ENCODE measurements at regions of chr1 and their contacts with region 1.

Region 1: DNA sequence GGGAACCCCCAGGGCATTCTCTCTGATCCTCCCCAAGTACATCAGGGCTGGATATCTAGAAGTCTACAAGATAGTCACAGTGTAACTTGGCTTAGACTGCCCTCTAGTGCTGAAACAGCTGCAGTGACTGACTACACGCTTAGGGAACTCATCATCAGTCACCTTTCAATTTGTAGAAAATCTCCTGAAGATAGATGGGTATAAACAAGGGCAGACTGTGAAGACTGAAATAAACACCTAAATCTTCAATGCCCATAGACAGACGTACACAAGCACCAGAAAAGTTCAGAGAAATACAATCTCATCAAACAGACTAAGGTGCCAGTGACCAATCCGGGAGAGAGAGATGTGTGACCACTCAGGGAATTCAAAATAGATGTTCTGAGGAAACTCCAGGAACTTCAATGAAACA is 46.6 kb downstream of the PACC1 start:
- DNase-seq: peak; percentile 42
- H3K4me3 Mint-ChIP-seq: no peak overlapping the region
- H3K27ac Mint-ChIP-seq: peak overlapping the region; percentile 17
- H3K4me1 Mint-ChIP-seq: peaks cover 4% of the 10 kb centered on the region
- H3K27me3 Mint-ChIP-seq: no peaks in the 10 kb centered on the region

Region 2: DNA sequence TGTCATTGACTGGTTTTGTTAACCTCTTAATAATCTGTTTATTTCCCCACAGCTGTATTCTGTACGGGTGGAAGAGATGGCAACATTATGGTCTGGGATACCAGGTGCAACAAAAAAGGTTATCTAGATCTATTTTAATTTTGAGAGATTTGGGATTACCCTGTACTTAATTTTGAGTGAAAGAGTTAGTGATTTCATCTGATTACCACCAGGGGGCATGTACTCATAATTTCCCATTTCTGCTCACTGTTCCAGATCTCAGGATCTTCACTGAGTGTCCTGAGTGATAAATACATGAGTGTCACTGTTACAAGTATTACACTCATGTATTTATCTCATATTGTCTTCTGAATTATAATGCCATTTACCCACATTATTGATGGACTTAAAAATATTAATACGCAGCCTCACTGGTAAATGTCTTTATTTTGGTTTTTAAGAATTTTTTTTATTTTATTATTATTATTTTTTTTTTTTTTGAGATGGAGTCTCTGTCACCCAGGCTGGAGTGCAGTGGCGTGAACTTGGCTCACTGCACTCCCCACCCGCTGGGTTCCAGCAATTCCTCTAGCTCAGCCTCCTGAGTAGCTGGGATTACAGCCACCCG is 305.1 kb before region 1 on chr1:
- intact Hi-C with region 1: loop called (anchors 2 kb)
- DNase-seq: no peak
- H3K4me3 Mint-ChIP-seq: no peak overlapping the region
- H3K27ac Mint-ChIP-seq: no peak overlapping the region
- H3K4me1 Mint-ChIP-seq: peaks cover 17% of the 10 kb centered on the region
- H3K27me3 Mint-ChIP-seq: no peaks in the 10 kb centered on the region

Region 3: GRCh38 chr1:212070720-212071302 is 297.3 kb before region 1 on chr1:
- intact Hi-C with region 1: loop called (anchors 1 kb)
- DNase-seq: no peak
- H3K4me3 Mint-ChIP-seq: no peak overlapping the region
- H3K27ac Mint-ChIP-seq: no peak overlapping the region
- H3K4me1 Mint-ChIP-seq: peaks cover 4% of the 10 kb centered on the region
- H3K27me3 Mint-ChIP-seq: no peaks in the 10 kb centered on the region

Region 4: DNA sequence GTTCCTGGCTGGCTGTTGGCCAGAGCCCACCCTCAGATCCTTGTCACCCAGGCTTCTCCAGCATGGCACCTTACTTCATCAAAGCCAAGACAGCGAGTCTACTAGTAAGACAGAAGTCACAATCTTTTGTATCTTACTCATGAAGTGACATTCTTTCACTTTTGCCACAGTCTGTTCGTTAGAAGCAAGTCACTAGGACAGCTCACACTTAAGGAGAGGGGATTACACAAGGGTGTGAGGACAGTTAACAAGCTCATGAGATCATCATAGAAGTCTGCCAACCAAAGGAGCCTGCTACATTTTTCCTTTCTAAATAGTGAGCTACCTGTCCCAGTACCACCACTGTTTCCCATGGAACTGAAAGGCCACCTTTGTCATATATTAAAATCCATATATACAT is 14.9 kb before region 1 on chr1:
- intact Hi-C with region 1: no loop called
- DNase-seq: no peak
- H3K4me3 Mint-ChIP-seq: no peak overlapping the region
- H3K27ac Mint-ChIP-seq: no peak overlapping the region
- H3K4me1 Mint-ChIP-seq: no peaks in the 10 kb centered on the region
- H3K27me3 Mint-ChIP-seq: no peaks in the 10 kb centered on the region